Dendritic cell treated with granulocyte-macrophage colony-stimulating factor and Interleukin-4, amounts not matched to agents 40 ng/mL and 50 ng/mL, for 4 days (primary cell): ENCODE measurements at regions of chr3 and their contacts with region 1.

Region 1: GRCh38 chr3:138935848-138936740 is 10.8 kb downstream of the FOXL2 start:
- H3K4me3 Mint-ChIP-seq: peak overlapping the region; percentile 76
- H3K27ac Mint-ChIP-seq: no peak overlapping the region
- H3K4me1 Mint-ChIP-seq: peaks cover 45% of the 10 kb centered on the region
- H3K27me3 Mint-ChIP-seq: peaks cover 92% of the 10 kb centered on the region

Region 2: GRCh38 chr3:138329127-138329983 is 606.7 kb before region 1 on chr3 and contains the start of gene NME9:
- intact Hi-C with region 1: loop called (anchors 10 kb)
- H3K4me3 Mint-ChIP-seq: peak within 1 kb of the TSS; percentile 71
- H3K27ac Mint-ChIP-seq: peak within 1 kb of the TSS; percentile 56
- H3K4me1 Mint-ChIP-seq: peaks cover 18% of the 10 kb centered on the region
- H3K27me3 Mint-ChIP-seq: peaks cover 29% of the 10 kb centered on the region

Region 3: GRCh38 chr3:138381950-138382688 is 554.0 kb before region 1 on chr3:
- intact Hi-C with region 1: no loop called
- H3K4me3 Mint-ChIP-seq: no peak overlapping the region
- H3K27ac Mint-ChIP-seq: peak overlapping the region; percentile 84
- H3K4me1 Mint-ChIP-seq: peaks cover 75% of the 10 kb centered on the region
- H3K27me3 Mint-ChIP-seq: no peaks in the 10 kb centered on the region

Region 4: GRCh38 chr3:138594150-138594934 is 341.8 kb before region 1 on chr3 and contains the start of gene CEP70:
- intact Hi-C with region 1: loop called (anchors 5 kb)
- H3K4me3 Mint-ChIP-seq: peak within 1 kb of the TSS; percentile 80
- H3K27ac Mint-ChIP-seq: peak within 1 kb of the TSS; percentile 64
- H3K4me1 Mint-ChIP-seq: peaks cover 16% of the 10 kb centered on the region
- H3K27me3 Mint-ChIP-seq: peaks cover 22% of the 10 kb centered on the region

Region 5: DNA sequence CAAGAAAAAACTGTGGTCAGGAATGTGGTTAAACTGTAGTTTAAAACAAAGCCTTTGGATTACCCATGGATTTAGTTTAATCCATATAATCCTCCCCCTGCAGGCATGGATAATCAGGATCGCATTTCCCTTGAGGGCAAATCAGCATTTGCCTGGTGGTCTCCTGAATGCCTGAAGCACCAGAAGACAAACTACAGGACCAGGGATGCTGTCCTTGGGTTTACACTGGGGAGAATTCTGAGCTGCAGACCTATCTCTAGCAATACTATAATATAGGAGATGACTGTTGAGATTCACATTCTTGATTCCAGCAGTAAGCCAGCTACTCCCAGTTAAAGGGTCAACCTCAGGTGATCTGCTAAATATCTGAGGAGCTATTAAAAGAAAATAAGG is 112.0 kb before region 1 on chr3:
- intact Hi-C with region 1: no loop called
- H3K4me3 Mint-ChIP-seq: no peak overlapping the region
- H3K27ac Mint-ChIP-seq: peak overlapping the region; percentile 26
- H3K4me1 Mint-ChIP-seq: peaks cover 14% of the 10 kb centered on the region
- H3K27me3 Mint-ChIP-seq: no peaks in the 10 kb centered on the region

Region 6: GRCh38 chr3:139329345-139329850 is 393.3 kb after region 1 on chr3:
- intact Hi-C with region 1: loop called (anchors 1 kb)
- H3K4me3 Mint-ChIP-seq: peak overlapping the region; percentile 59
- H3K27ac Mint-ChIP-seq: no peak overlapping the region
- H3K4me1 Mint-ChIP-seq: peaks cover 9% of the 10 kb centered on the region
- H3K27me3 Mint-ChIP-seq: peaks cover 25% of the 10 kb centered on the region

Region 7: GRCh38 chr3:139389458-139390209 is 453.5 kb after region 1 on chr3 and contains the start of gene COPB2:
- intact Hi-C with region 1: loop called (anchors 5 kb)
- H3K4me3 Mint-ChIP-seq: peak within 1 kb of the TSS; percentile 80
- H3K27ac Mint-ChIP-seq: peak within 1 kb of the TSS; percentile 95
- H3K4me1 Mint-ChIP-seq: peaks cover 29% of the 10 kb centered on the region
- H3K27me3 Mint-ChIP-seq: no peaks in the 10 kb centered on the region